Posterior vena cava (tissue), 2 donors: ENCODE measurements at regions of chr1 and their contacts with region 1.

Region 1: GRCh38 chr1:214416417-214416816 is 135.0 kb downstream of the PTPN14 start:
- DNase-seq: no peak

Region 2: GRCh38 chr1:214362188-214362882 is 54.1 kb before region 1 on chr1:
- intact Hi-C with region 1: loop called in 1 of 2 experiments (anchors 2 kb)
- DNase-seq: no peak

Region 3: GRCh38 chr1:214551436-214552173 is 135.2 kb after region 1 on chr1 and contains the start of gene PTPN14:
- intact Hi-C with region 1: loop called in 1 of 2 experiments (anchors 10 kb)
- DNase-seq: peak; percentile 94
- total RNA-seq, gene PTPN14: 36.9 to 51.5 TPM

Region 4: DNA sequence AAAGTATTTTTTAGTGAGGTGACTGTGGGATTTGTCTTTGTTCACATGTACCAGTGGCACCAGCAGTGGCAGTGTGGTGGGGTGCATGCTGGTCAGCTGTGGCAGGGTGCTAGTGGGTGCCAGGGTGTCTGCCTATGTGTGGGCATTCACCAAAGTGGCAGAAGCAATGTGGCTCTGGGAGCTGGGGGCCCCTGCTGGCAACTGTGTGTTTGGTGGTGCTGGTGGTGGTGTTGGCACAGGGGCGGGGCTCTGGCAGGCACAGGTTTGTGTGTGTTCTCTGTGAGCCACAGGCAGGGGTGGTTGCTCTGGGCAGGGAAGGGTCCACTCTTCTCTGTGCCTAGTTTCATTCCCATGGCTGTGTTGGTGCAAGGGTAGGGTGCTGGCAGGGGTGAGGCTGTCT is 348.1 kb after region 1 on chr1:
- intact Hi-C with region 1: no loop called
- DNase-seq: peak; percentile 38

Region 5: DNA sequence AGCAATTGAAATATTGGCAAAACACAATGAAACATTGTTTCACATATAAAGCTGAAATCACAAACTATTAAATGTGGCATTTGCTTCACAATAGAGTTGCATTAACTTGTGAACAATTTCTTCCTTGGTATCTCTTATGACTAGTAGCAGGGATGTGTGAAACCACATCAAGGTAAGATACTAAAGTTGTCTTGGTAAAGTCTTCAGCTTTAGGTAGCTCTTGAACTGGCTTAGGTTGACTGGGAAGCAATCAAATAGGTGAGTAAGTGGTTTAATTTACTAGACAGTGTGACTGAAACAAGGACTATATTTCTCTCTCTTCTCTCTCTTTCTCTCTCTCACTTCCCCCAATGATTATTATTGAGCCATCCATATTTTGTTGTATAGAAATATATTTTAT is 524.6 kb after region 1 on chr1:
- intact Hi-C with region 1: no loop called
- DNase-seq: no peak